Activated CD4-positive, alpha-beta T cell treated with anti-CD3 and anti-CD28 coated beads for 36 hours (primary cell): ENCODE measurements at regions of chr19 and their contacts with region 1.

Region 1: GRCh38 chr19:44890366-44891015 is 563 bp upstream of the TOMM40 start:
- DNase-seq: no peak
- ATAC-seq: peak; percentile 84
- H3K4me3 Mint-ChIP-seq: peak overlapping the region; percentile 74
- H3K27ac Mint-ChIP-seq: peak overlapping the region; percentile 96
- H3K4me1 Mint-ChIP-seq: peaks cover 29% of the 10 kb centered on the region
- H3K27me3 Mint-ChIP-seq: no peaks in the 10 kb centered on the region

Region 2: GRCh38 chr19:44653977-44654774 is 236.3 kb before region 1 on chr19:
- CTCF ChIA-PET with region 1: no interaction called
- POLR2A ChIA-PET with region 1: no interaction called
- intact Hi-C with region 1: no loop called
- DNase-seq: peak; percentile 89
- ATAC-seq: peak; percentile 97
- H3K4me3 Mint-ChIP-seq: no peak overlapping the region
- H3K27ac Mint-ChIP-seq: no peak overlapping the region
- H3K4me1 Mint-ChIP-seq: peaks cover 11% of the 10 kb centered on the region
- H3K27me3 Mint-ChIP-seq: no peaks in the 10 kb centered on the region

Region 3: GRCh38 chr19:44746946-44747738 is 143.3 kb before region 1 on chr19:
- CTCF ChIA-PET with region 1: no interaction called
- POLR2A ChIA-PET with region 1: no interaction called
- intact Hi-C with region 1: loop called in 1 of 2 experiments (anchors 1 kb)
- DNase-seq: peak; percentile 98
- ATAC-seq: peak; percentile 85
- H3K4me3 Mint-ChIP-seq: peak overlapping the region; percentile 91
- H3K27ac Mint-ChIP-seq: peak overlapping the region; percentile 95
- H3K4me1 Mint-ChIP-seq: peaks cover 43% of the 10 kb centered on the region
- H3K27me3 Mint-ChIP-seq: no peaks in the 10 kb centered on the region

Region 4: GRCh38 chr19:44912854-44913253 is 22.4 kb after region 1 on chr19:
- CTCF ChIA-PET with region 1: interaction called, 3 read pairs
- POLR2A ChIA-PET with region 1: interaction called, 3 read pairs
- intact Hi-C with region 1: loop called in 1 of 2 experiments (anchors 1 kb)
- DNase-seq: no peak
- ATAC-seq: no peak
- H3K4me3 Mint-ChIP-seq: no peak overlapping the region
- H3K27ac Mint-ChIP-seq: no peak overlapping the region
- H3K4me1 Mint-ChIP-seq: peaks cover 8% of the 10 kb centered on the region
- H3K27me3 Mint-ChIP-seq: peaks cover 27% of the 10 kb centered on the region

Region 5: GRCh38 chr19:45079063-45079910 is 188.8 kb after region 1 on chr19 and contains the start of gene GEMIN7:
- CTCF ChIA-PET with region 1: no interaction called
- POLR2A ChIA-PET with region 1: no interaction called
- intact Hi-C with region 1: loop called in 1 of 2 experiments (anchors 1 kb)
- DNase-seq: peak; percentile 90
- ATAC-seq: peak; percentile 65
- H3K4me3 Mint-ChIP-seq: peak within 1 kb of the TSS; percentile 99
- H3K27ac Mint-ChIP-seq: peak within 1 kb of the TSS; percentile 88
- H3K4me1 Mint-ChIP-seq: peaks cover 43% of the 10 kb centered on the region
- H3K27me3 Mint-ChIP-seq: no peaks in the 10 kb centered on the region
- total RNA-seq, gene GEMIN7: 35.4 to 35.5 TPM

Region 6: GRCh38 chr19:45250832-45251451 is 360.5 kb after region 1 on chr19 and contains the start of gene MARK4:
- CTCF ChIA-PET with region 1: no interaction called
- POLR2A ChIA-PET with region 1: no interaction called
- intact Hi-C with region 1: loop called in 1 of 2 experiments (anchors 1 kb)
- DNase-seq: peak; percentile 72
- ATAC-seq: peak; percentile 67
- H3K4me3 Mint-ChIP-seq: peak within 1 kb of the TSS; percentile 77
- H3K27ac Mint-ChIP-seq: peak within 1 kb of the TSS; percentile 76
- H3K4me1 Mint-ChIP-seq: peaks cover 29% of the 10 kb centered on the region
- H3K27me3 Mint-ChIP-seq: peaks cover 2% of the 10 kb centered on the region
- total RNA-seq, gene MARK4: 19.1 to 19.6 TPM